RWPE1 (cell line): ENCODE measurements at regions of chr2 and their contacts with region 1.

Region 1: GRCh38 chr2:24203029-24203786 is 28.4 kb downstream of the FAM228A start:
- DNase-seq: no peak
- H3K27ac ChIP-seq: no peak overlapping the region
- CTCF ChIP-seq: no peak

Region 2: GRCh38 chr2:24163180-24163579 is 40.0 kb before region 1 on chr2:
- CTCF ChIA-PET with region 1: interaction called, 10 read pairs
- POLR2A ChIA-PET with region 1: no interaction called
- DNase-seq: no peak
- H3K27ac ChIP-seq: no peak overlapping the region
- CTCF ChIP-seq: no peak